ENCODE measurements at regions of chr17 and their contacts with region 1.

Region 1: GRCh38 chr17:6853764-6854442 is 22.4 kb upstream of the TEKT1 start:
- DNase-seq: peak; percentile 34 to 65
- H3K4me3 ChIP-seq: peak overlapping the region; percentile 50 to 69 (median 54)
- H3K27ac ChIP-seq: peak overlapping the region; percentile 59; the same call in 1 of the 2 replicates
- H3K4me1 ChIP-seq: no peaks in the 10 kb centered on the region
- H3K27me3 ChIP-seq: peaks cover 0 to 1% (median 0%) of the 10 kb centered on the region in 4 experiments; a peak in 1 of 7 replicates
- CTCF ChIP-seq: peak; percentile 56 to 74 (median 63)
- EP300 ChIP-seq: no peak
- POLR2A ChIP-seq: peak in 1 of 2 experiments; percentile 42; a peak in 2 of 3 replicates
- RAD21 ChIP-seq: peak in 1 of 2 experiments; percentile 43; a peak in 2 of 4 replicates

Region 2: DNA sequence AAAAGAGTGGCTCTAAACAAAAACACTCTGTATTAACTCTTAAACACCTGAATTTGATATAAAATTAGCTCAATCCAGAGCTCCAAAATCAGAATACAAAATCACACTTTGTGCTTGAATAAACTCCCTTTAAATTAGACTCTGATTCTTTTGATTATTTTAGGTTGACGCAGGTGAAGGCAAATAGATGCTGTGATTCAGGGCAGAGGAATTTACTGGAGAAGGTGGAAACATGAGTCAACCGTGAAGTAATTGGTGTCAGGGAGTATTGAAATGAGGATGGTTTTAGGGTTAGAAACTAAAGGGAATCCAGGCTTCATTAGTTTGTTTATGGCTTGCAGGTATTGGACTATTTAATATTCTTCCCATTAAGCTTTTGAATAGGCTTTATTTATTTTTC is 14.7 kb after region 1 on chr17:
- CTCF ChIA-PET with region 1: interaction called, 12 read pairs
- POLR2A ChIA-PET with region 1: no interaction called
- DNase-seq: no peak
- H3K4me3 ChIP-seq: no peak overlapping the region
- H3K27ac ChIP-seq: no peak overlapping the region
- H3K4me1 ChIP-seq: no peaks in the 10 kb centered on the region
- H3K27me3 ChIP-seq: no peaks in the 10 kb centered on the region
- CTCF ChIP-seq: no peak
- EP300 ChIP-seq: no peak
- POLR2A ChIP-seq: no peak
- RAD21 ChIP-seq: no peak

Measured in H1 (cell line).